Heart right ventricle (tissue), 16 donors: ENCODE measurements at regions of chr18 and their contacts with region 1.

Region 1: GRCh38 chr18:34661464-34662111 is 48.5 kb upstream of the DTNA start:
- DNase-seq: no peak
- ATAC-seq: peak in 7 of 8 donors; percentile 41 to 66 (median 55)
- H3K4me3 ChIP-seq: no peak overlapping the region
- H3K27ac ChIP-seq: peak overlapping the region in 5 of 10 donors; percentile 86 to 92 (median 87)
- H3K4me1 ChIP-seq: peaks cover 2 to 49% (median 28%) of the 10 kb centered on the region in 9 donors
- H3K27me3 ChIP-seq: no peaks in the 10 kb centered on the region
- CTCF ChIP-seq: peak; percentile 68 to 82 (median 77)

Region 2: GRCh38 chr18:34592961-34593382 is 68.6 kb before region 1 on chr18:
- intact Hi-C with region 1: loop called in 1 of 10 experiments (anchors 10 kb)
- DNase-seq: peak; percentile 48 to 58
- ATAC-seq: peak; percentile 80 to 94 (median 92)
- H3K4me3 ChIP-seq: peak overlapping the region in 9 of 10 donors; percentile 29 to 54 (median 48)
- H3K27ac ChIP-seq: peak overlapping the region; percentile 11 to 87 (median 74)
- H3K4me1 ChIP-seq: peaks cover 0 to 42% (median 3%) of the 10 kb centered on the region in 9 donors
- H3K27me3 ChIP-seq: no peaks in the 10 kb centered on the region
- CTCF ChIP-seq: no peak

Region 3: GRCh38 chr18:34729264-34729663 is 67.7 kb after region 1 on chr18:
- intact Hi-C with region 1: loop called in 2 of 10 experiments (anchors 2 to 10 kb)
- DNase-seq: no peak
- ATAC-seq: peak in 5 of 8 donors; percentile 62 to 74 (median 66)
- H3K4me3 ChIP-seq: no peak overlapping the region
- H3K27ac ChIP-seq: peak overlapping the region in 9 of 10 donors; percentile 43 to 69 (median 64)
- H3K4me1 ChIP-seq: peaks cover 5 to 39% (median 14%) of the 10 kb centered on the region in 9 donors
- H3K27me3 ChIP-seq: no peaks in the 10 kb centered on the region
- CTCF ChIP-seq: peak in 8 of 9 donors; percentile 16 to 53 (median 41)

Region 4: DNA sequence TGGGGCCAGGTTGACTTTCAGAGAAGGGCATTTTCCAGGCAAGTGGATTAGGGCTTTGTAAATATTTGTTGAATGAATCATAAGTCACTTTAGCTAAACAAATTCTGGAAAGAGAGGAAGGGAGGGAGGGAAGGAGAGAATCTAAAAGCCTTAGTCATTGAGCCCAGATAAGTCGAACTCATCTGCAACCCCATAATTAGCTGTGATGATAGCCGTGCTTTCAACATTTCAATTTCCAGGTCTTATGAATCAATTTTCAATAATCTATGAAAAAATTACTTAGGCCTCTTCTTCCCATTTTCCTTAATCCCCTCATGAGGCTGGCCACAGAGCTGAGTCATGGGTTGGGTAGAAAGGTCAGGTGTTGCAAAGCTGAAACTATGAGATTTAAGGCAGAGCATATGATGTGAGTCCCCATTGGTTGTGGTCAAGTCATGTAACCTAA is 267.8 kb after region 1 on chr18:
- intact Hi-C with region 1: no loop called
- DNase-seq: no peak
- ATAC-seq: no peak
- H3K4me3 ChIP-seq: no peak overlapping the region
- H3K27ac ChIP-seq: no peak overlapping the region
- H3K4me1 ChIP-seq: peaks cover 0 to 6% (median 0%) of the 10 kb centered on the region in 9 donors
- H3K27me3 ChIP-seq: no peaks in the 10 kb centered on the region
- CTCF ChIP-seq: no peak